ENCODE measurements at regions of chr17 and their contacts with region 1.

Region 1: GRCh38 chr17:10435096-10435495 is 13.3 kb upstream of the MYH8 start:
- DNase-seq: no peak
- ATAC-seq: no peak

Region 2: GRCh38 chr17:10169290-10169689 is 265.8 kb before region 1 on chr17:
- intact Hi-C with region 1: loop called (anchors 5 kb)
- DNase-seq: no peak
- ATAC-seq: no peak

Region 3: DNA sequence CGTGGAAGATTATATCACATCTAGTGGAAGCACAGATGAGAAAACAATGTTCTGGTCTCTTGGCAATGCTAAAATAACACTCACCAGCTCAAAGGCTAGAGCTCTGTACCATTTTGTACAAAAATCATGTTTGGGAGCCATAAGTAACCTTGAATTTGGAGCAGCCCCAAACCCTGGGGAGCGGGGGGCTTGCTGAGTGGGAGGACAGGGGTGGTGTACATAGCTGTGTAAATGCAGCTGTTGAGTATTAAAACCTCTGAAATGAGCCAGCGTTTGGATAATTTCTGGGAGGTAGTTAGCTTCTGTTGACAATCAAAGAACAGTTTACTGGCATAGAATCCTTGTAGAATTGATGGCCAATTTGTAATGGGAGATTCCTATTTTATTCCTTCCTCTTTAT is 17.7 kb before region 1 on chr17:
- intact Hi-C with region 1: no loop called
- DNase-seq: no peak
- ATAC-seq: no peak